Cardiac septum (tissue), 1 donor: ENCODE measurements at regions of chr19 and their contacts with region 1.

Region 1: DNA sequence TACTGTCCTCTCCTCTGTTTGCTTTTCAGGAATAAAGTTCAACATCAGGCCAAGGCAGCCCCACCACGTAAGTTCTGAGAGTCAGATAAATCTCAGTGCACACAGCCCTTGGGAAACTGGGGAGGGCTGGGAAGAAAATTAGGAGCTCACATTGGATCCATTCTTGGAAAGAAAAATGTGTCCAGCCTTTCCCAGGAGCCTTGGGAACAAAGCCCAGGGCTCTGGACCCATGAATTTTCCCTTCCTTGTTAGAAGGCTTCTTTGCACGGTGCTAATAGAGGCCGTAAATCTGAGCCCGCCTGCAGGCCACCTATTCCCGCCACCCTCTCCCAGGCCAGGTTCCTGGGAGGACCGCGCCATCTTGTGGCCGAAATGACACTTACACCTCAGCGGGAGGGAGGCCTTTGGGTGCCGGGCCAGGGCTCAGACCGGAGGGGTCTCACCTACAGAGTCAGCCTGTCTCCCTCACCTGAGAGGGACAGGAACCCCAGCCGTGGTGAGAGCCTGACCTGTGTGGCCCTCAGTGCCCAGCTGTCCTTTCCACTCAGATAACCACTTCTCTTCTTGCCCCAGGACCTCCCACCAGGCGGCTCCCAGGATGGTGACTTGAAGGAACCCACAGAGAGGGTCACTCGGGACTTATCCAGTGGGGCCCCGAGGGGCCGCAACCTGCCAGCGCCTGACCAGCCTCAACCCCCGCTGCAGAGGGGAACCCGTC is 25.1 kb upstream of the KCTD15 start:
- DNase-seq: no peak

Region 2: DNA sequence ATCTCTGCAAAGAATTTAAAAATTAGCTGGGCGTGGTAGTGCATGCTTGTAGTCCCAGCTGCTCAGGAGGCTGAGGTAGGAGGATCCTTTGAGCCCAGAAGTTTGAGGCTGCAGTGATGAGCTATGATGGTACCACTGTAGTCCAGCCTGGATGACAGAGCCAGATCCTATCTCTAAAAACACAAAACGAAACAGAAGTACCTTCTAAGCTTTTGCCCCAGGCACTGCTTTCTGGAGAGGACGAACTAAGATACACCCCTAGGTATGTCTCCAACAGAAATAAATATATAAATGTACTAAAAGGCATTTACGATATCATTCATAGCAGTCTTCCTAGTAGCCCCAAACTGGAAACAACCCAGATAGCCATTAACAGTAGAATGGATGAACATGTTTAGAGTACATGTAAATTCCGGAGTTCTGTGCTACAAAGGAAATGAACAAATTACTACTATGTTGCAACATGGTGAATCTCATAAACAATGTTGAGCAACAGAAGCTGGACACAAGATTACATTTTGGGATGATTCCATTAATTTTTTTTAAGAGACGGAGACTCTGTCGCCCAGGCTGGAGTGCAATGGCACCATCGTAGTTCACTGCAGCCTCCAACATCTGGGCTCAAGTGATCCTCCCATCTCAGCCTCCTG is 540.2 kb before region 1 on chr19:
- intact Hi-C with region 1: loop called (anchors 5 kb)
- DNase-seq: no peak

Region 3: GRCh38 chr19:33241530-33242101 is 529.9 kb before region 1 on chr19:
- intact Hi-C with region 1: loop called (anchors 5 kb)
- DNase-seq: no peak

Region 4: DNA sequence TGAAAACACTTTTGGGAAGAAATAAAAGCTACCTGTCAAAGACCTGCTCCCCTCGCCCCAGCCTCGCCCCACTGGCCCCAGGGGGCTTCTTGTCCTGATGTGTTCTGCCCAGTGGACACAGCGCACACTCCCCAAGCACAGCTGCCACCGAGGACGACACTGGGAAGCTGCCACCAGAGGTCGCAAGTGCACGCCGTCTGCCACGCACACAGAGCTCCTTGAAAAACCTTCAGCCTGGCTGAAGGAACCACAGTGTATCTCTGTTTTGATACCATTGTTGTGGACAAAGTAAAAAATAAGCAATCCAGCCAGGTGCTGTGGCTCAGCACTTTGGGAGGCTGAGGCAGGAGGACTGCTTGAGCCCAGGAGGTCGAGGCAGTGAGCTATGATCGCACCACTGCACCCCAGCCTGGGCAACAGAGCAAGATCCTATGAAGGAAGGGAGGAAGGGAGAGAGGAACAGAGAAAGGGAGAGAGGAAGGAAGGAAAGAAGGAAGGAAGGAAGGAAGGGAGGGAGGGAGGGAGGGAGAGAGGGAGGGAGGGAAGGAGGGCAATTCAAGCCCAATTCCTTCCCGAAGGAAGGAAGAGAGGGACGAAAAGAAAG is 340.8 kb before region 1 on chr19:
- intact Hi-C with region 1: loop called (anchors 1 kb)
- DNase-seq: no peak

Region 5: GRCh38 chr19:33797802-33798671 is 26.5 kb after region 1 on chr19:
- intact Hi-C with region 1: no loop called
- DNase-seq: no peak